IMR-90 (cell line): ENCODE measurements at regions of chr11 and their contacts with region 1.

Region 1: GRCh38 chr11:101987370-101987769 is 59.9 kb upstream of the CFAP300 start:
- DNase-seq: no peak
- ATAC-seq: no peak
- H3K4me3 ChIP-seq: no peak overlapping the region
- H3K27ac ChIP-seq: no peak overlapping the region
- H3K4me1 ChIP-seq: no peaks in the 10 kb centered on the region
- H3K27me3 ChIP-seq: no peaks in the 10 kb centered on the region
- CTCF ChIP-seq: no peak
- POLR2A ChIP-seq: no peak
- RAD21 ChIP-seq: no peak

Region 2: DNA sequence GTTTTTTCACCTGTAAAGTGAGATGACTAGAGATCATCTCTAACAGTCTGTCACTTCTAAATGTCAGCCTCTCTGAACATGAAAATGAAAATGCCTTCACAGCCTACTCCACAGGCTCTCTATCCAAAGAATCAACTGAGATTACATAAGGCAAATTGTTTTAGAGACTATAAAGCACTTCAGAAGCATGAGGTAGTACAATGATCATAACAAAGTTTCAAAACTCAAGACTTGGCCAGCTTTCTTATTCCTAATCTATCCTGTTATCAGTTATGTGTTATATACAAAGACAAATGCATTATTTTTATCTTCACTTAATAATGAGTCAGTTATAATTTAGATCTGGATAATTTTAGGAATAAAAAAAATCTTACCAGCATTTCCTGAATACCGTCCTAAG is 92.9 kb before region 1 on chr11:
- CTCF ChIA-PET with region 1: no interaction called
- POLR2A ChIA-PET with region 1: no interaction called
- dilution Hi-C with region 1: no loop called
- in situ Hi-C with region 1: no loop called
- intact Hi-C with region 1: no loop called
- DNase-seq: no peak
- ATAC-seq: no peak
- H3K4me3 ChIP-seq: no peak overlapping the region
- H3K27ac ChIP-seq: no peak overlapping the region
- H3K4me1 ChIP-seq: no peaks in the 10 kb centered on the region
- H3K27me3 ChIP-seq: no peaks in the 10 kb centered on the region
- CTCF ChIP-seq: no peak
- POLR2A ChIP-seq: no peak
- RAD21 ChIP-seq: no peak

Region 3: GRCh38 chr11:101944923-101945322 is 42.4 kb before region 1 on chr11:
- CTCF ChIA-PET with region 1: no interaction called
- POLR2A ChIA-PET with region 1: no interaction called
- dilution Hi-C with region 1: no loop called
- in situ Hi-C with region 1: no loop called
- intact Hi-C with region 1: loop called (anchors 5 kb)
- DNase-seq: no peak
- ATAC-seq: no peak
- H3K4me3 ChIP-seq: no peak overlapping the region
- H3K27ac ChIP-seq: no peak overlapping the region
- H3K4me1 ChIP-seq: no peaks in the 10 kb centered on the region
- H3K27me3 ChIP-seq: no peaks in the 10 kb centered on the region
- CTCF ChIP-seq: no peak
- POLR2A ChIP-seq: no peak
- RAD21 ChIP-seq: no peak

Region 4: DNA sequence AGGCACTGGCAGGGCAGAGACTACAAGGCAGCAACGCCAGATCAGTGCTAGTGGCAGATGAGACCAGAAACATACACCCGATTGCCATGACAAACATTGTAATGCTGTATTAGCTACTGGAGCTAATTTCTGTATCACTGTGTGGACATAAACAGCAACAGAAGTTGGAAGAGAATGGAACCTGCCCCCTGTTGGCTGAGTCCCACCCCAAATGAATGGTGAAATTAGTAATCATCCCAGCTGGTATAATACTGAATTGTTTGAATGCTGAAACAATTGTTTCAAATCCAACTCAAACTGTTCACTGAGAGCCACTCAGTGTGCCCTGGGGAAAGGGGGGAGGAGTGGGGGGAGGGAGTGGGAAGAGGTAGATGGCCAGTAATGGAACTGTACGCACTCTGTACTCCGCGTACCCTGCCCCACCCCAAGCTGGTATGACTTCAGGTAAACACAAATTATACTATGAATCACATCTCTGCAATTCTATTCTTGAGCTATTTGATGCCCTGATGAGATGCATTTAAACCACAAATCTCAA is 318.7 kb after region 1 on chr11:
- CTCF ChIA-PET with region 1: no interaction called
- POLR2A ChIA-PET with region 1: no interaction called
- dilution Hi-C with region 1: no loop called
- in situ Hi-C with region 1: no loop called
- intact Hi-C with region 1: no loop called
- DNase-seq: no peak
- ATAC-seq: no peak
- H3K4me3 ChIP-seq: no peak overlapping the region
- H3K27ac ChIP-seq: no peak overlapping the region
- H3K4me1 ChIP-seq: no peaks in the 10 kb centered on the region
- H3K27me3 ChIP-seq: no peaks in the 10 kb centered on the region
- CTCF ChIP-seq: no peak
- POLR2A ChIP-seq: no peak
- RAD21 ChIP-seq: no peak